PC-9 (cell line): ENCODE measurements at regions of chr9 and their contacts with region 1.

Region 1: DNA sequence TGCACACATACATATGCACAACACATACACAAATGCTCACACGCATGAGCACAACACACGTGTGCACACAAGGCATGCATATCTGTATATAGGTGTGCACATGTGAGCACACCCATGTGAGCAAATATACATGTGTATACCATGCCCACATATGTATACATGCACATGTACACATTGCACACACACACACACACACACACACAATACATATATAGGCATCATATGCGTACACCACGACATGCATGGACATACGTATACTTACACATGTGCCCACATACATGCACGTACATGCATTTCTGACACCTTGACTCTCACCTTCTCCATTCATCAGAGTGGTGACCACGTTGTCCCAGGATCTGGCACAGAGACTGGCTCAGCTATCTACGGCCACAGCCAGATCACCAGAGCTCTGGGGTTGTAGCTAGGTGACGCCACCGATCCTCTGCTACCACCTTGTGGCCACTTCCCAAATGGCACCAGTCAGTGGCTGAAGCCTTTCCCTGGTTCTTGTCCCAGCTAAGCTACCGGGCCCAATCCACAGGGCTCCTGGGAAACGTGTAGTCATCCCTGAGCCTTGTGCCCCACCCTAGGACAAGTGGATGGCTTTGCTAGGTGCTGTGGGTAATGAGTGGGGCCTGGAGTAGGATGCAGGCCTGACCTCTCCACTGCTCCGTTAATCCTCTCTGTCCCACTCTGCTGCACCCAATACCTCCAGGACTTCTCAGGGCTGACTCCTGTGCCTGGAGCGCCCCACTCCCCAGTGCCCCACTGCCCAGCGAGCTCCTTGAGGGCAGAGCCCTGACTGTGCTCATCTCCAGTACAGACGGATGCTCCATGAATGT is 194.4 kb downstream of the RGS3 start:
- DNase-seq: peak; percentile 48 to 86
- H3K4me3 ChIP-seq: no peak overlapping the region
- H3K27ac ChIP-seq: no peak overlapping the region
- H3K4me1 ChIP-seq: no peaks in the 10 kb centered on the region
- H3K27me3 ChIP-seq: peaks cover 41% of the 10 kb centered on the region
- CTCF ChIP-seq: peak; percentile 92

Region 2: GRCh38 chr9:113275157-113276131 is 382.5 kb before region 1 on chr9 and contains the starts of genes CDC26 and PRPF4:
- CTCF ChIA-PET with region 1: interaction called, 6 read pairs
- POLR2A ChIA-PET with region 1: no interaction called
- intact Hi-C with region 1: loop called (anchors 1 kb)
- DNase-seq: peak; percentile 90 to 94
- H3K4me3 ChIP-seq: peak within 1 kb of the TSS; percentile 81
- H3K27ac ChIP-seq: peak within 1 kb of the TSS; percentile 50
- H3K4me1 ChIP-seq: peaks cover 13% of the 10 kb centered on the region
- H3K27me3 ChIP-seq: no peaks in the 10 kb centered on the region
- CTCF ChIP-seq: no peak
- total RNA-seq, gene CDC26: 40.4 and 43.4 TPM in 2 replicates
- total RNA-seq, gene PRPF4: 31.6 and 36.3 TPM in 2 replicates

Region 3: GRCh38 chr9:113401027-113401792 is 256.7 kb before region 1 on chr9 and contains the start of gene ALAD:
- CTCF ChIA-PET with region 1: no interaction called
- POLR2A ChIA-PET with region 1: interaction called, 3 read pairs
- intact Hi-C with region 1: loop called (anchors 2 kb)
- DNase-seq: peak; percentile 93 to 100
- H3K4me3 ChIP-seq: peak within 1 kb of the TSS; percentile 75
- H3K27ac ChIP-seq: peak within 1 kb of the TSS; percentile 14; the same call in 1 of the 2 replicates
- H3K4me1 ChIP-seq: peaks cover 32% of the 10 kb centered on the region
- H3K27me3 ChIP-seq: no peaks in the 10 kb centered on the region
- CTCF ChIP-seq: peak; percentile 89
- total RNA-seq, gene ALAD: 33.3 and 42.7 TPM in 2 replicates

Region 4: GRCh38 chr9:113446323-113446740 is 211.6 kb before region 1 on chr9:
- CTCF ChIA-PET with region 1: interaction called, 17 read pairs
- POLR2A ChIA-PET with region 1: interaction called, 3 read pairs
- intact Hi-C with region 1: loop called (anchors 1 kb)
- DNase-seq: no peak
- H3K4me3 ChIP-seq: no peak overlapping the region
- H3K27ac ChIP-seq: no peak overlapping the region
- H3K4me1 ChIP-seq: no peaks in the 10 kb centered on the region
- H3K27me3 ChIP-seq: no peaks in the 10 kb centered on the region
- CTCF ChIP-seq: peak; percentile 80

Region 5: GRCh38 chr9:113572076-113572861 is 85.7 kb before region 1 on chr9:
- CTCF ChIA-PET with region 1: interaction called, 15 read pairs
- POLR2A ChIA-PET with region 1: no interaction called
- intact Hi-C with region 1: no loop called
- DNase-seq: no peak
- H3K4me3 ChIP-seq: no peak overlapping the region
- H3K27ac ChIP-seq: no peak overlapping the region
- H3K4me1 ChIP-seq: peaks cover 56% of the 10 kb centered on the region
- H3K27me3 ChIP-seq: no peaks in the 10 kb centered on the region
- CTCF ChIP-seq: no peak

Region 6: DNA sequence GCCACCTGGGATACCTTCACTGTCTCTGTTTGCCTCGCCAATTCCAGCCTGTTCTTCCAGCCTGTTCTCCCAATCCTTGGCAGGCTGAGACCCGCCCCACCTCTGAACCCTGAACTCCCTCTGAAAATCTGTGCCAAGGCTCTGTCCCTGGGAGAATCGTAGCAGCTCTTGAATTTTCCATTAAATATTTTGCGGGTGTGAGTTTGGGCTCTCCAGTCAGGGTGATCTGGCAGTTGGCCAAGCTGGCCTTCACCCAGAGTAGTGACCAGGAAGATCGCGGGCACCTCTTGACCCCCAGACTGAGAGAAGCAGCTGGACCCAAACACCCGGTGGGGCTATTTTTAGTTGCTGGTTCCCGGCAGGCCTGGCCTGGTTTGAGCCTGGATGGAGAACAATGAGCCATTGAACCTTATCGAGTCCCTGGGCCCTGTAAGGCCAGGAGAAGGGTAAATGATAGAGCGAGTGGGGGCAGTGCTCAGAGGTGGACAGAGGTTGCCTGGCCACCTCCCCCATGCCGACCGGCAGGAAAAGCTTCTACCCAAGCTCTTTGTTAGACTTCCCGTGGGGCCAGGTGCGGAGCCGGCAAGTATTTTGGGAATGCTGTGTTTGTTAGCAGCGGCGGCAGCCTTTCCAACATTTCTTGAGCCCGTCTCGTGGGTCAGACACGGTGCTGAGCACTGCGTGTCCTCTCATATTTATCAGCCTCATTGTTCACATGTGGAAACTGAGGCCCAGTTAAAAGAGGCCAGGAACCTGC is 48.2 kb before region 1 on chr9:
- CTCF ChIA-PET with region 1: no interaction called
- POLR2A ChIA-PET with region 1: no interaction called
- intact Hi-C with region 1: no loop called
- DNase-seq: no peak
- H3K4me3 ChIP-seq: no peak overlapping the region
- H3K27ac ChIP-seq: no peak overlapping the region
- H3K4me1 ChIP-seq: no peaks in the 10 kb centered on the region
- H3K27me3 ChIP-seq: no peaks in the 10 kb centered on the region
- CTCF ChIP-seq: no peak